Naive thymus-derived CD8-positive, alpha-beta T cell (primary cell): ENCODE measurements at regions of chr1 and their contacts with region 1.

Region 1: DNA sequence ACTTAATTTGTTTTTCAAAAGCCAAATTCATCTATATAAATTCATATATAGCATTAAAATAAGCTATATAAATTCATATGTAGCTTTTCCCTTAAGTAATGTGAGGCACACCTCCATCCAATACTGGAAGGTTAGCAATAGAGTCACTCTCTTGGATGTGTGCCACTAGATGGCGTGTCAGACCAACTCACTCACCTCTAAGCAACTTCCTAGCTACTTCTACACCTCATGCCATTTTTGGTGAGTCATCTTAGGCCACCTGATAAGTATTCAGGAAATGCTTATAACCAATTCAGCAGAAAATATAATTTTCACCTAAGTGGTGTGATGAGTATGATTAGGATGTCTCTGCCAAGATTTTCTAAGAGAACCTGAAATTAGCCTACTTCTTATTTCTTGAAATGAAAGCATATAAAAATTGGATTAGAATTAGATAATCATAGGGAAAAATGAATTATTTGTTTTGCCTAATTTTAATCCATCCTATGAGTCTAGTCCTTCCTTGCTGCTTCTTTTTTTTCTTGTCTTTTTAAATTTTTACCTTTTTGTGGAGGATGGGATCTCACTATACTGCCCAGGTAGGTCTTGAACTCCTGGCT is 34.4 kb upstream of the TADA1 start:
- DNase-seq: peak; percentile 38 to 84 (median 70)
- ATAC-seq: peak; percentile 100
- H3K4me3 Mint-ChIP-seq: no peak overlapping the region
- H3K27ac Mint-ChIP-seq: no peak overlapping the region
- H3K4me1 Mint-ChIP-seq: peaks cover 0 to 5% (median 0%) of the 10 kb centered on the region in 4 donors
- H3K27me3 Mint-ChIP-seq: peaks cover 0 to 4% (median 2%) of the 10 kb centered on the region in 5 donors

Region 2: GRCh38 chr1:166933633-166934032 is 23.1 kb after region 1 on chr1:
- POLR2A ChIA-PET with region 1: no interaction called
- DNase-seq: no peak
- ATAC-seq: no peak
- H3K4me3 Mint-ChIP-seq: no peak overlapping the region
- H3K27ac Mint-ChIP-seq: no peak overlapping the region
- H3K4me1 Mint-ChIP-seq: peaks cover 0 to 4% (median 0%) of the 10 kb centered on the region in 4 donors
- H3K27me3 Mint-ChIP-seq: peaks cover 5 to 28% (median 10%) of the 10 kb centered on the region in 5 donors

Region 3: GRCh38 chr1:167059045-167059808 is 148.7 kb after region 1 on chr1:
- POLR2A ChIA-PET with region 1: interaction called, 10 read pairs
- DNase-seq: peak; percentile 38 to 84 (median 65)
- ATAC-seq: peak; percentile 53 to 68
- H3K4me3 Mint-ChIP-seq: peak overlapping the region in 3 of 10 donors; percentile 33 to 60 (median 35)
- H3K27ac Mint-ChIP-seq: peak overlapping the region in 3 of 10 donors; percentile 6 to 55 (median 22)
- H3K4me1 Mint-ChIP-seq: peaks cover 0 to 11% (median 4%) of the 10 kb centered on the region in 4 donors
- H3K27me3 Mint-ChIP-seq: no peaks in the 10 kb centered on the region